ENCODE measurements at regions of chr1 and their contacts with region 1.

Region 1: GRCh38 chr1:19651141-19651737 is 7.1 kb downstream of the NBL1 start:
- DNase-seq: peak; percentile 62
- H3K4me3 ChIP-seq: no peak overlapping the region
- H3K27ac ChIP-seq: no peak overlapping the region
- H3K4me1 ChIP-seq: peaks cover 8% of the 10 kb centered on the region
- H3K27me3 ChIP-seq: no peaks in the 10 kb centered on the region
- CTCF ChIP-seq: peak; percentile 74

Region 2: GRCh38 chr1:18902523-18903290 is 748.5 kb before region 1 on chr1 and contains the start of gene ALDH4A1:
- CTCF ChIA-PET with region 1: no interaction called
- POLR2A ChIA-PET with region 1: no interaction called
- intact Hi-C with region 1: loop called (anchors 10 kb)
- DNase-seq: peak; percentile 99
- H3K4me3 ChIP-seq: peak within 1 kb of the TSS; percentile 89
- H3K27ac ChIP-seq: peak within 1 kb of the TSS; percentile 95
- H3K4me1 ChIP-seq: peaks cover 26% of the 10 kb centered on the region
- H3K27me3 ChIP-seq: no peaks in the 10 kb centered on the region
- CTCF ChIP-seq: no peak
- total RNA-seq, gene ALDH4A1: 18.4 and 23.1 TPM in 2 replicates

Region 3: GRCh38 chr1:19199969-19200604 is 451.2 kb before region 1 on chr1:
- CTCF ChIA-PET with region 1: interaction called, 3 read pairs
- POLR2A ChIA-PET with region 1: no interaction called
- intact Hi-C with region 1: loop called (anchors 5 kb)
- DNase-seq: no peak
- H3K4me3 ChIP-seq: no peak overlapping the region
- H3K27ac ChIP-seq: no peak overlapping the region
- H3K4me1 ChIP-seq: peaks cover 8% of the 10 kb centered on the region
- H3K27me3 ChIP-seq: no peaks in the 10 kb centered on the region
- CTCF ChIP-seq: no peak

Region 4: GRCh38 chr1:19251305-19252196 is 399.7 kb before region 1 on chr1 and contains the starts of genes EMC1 and MRTO4:
- CTCF ChIA-PET with region 1: interaction called, 3 read pairs
- POLR2A ChIA-PET with region 1: no interaction called
- intact Hi-C with region 1: loop called (anchors 2 kb)
- DNase-seq: peak; percentile 94
- H3K4me3 ChIP-seq: peak within 1 kb of the TSS; percentile 84
- H3K27ac ChIP-seq: peak within 1 kb of the TSS; percentile 99
- H3K4me1 ChIP-seq: peaks cover 25% of the 10 kb centered on the region
- H3K27me3 ChIP-seq: no peaks in the 10 kb centered on the region
- CTCF ChIP-seq: no peak
- total RNA-seq, gene EMC1: 75.9 and 84.3 TPM in 2 replicates
- total RNA-seq, gene MRTO4: 125 and 145 TPM in 2 replicates

Region 5: GRCh38 chr1:19305880-19306279 is 345.4 kb before region 1 on chr1:
- CTCF ChIA-PET with region 1: no interaction called
- POLR2A ChIA-PET with region 1: no interaction called
- intact Hi-C with region 1: no loop called
- DNase-seq: no peak
- H3K4me3 ChIP-seq: no peak overlapping the region
- H3K27ac ChIP-seq: no peak overlapping the region
- H3K4me1 ChIP-seq: peaks cover 5% of the 10 kb centered on the region
- H3K27me3 ChIP-seq: no peaks in the 10 kb centered on the region
- CTCF ChIP-seq: no peak

Region 6: DNA sequence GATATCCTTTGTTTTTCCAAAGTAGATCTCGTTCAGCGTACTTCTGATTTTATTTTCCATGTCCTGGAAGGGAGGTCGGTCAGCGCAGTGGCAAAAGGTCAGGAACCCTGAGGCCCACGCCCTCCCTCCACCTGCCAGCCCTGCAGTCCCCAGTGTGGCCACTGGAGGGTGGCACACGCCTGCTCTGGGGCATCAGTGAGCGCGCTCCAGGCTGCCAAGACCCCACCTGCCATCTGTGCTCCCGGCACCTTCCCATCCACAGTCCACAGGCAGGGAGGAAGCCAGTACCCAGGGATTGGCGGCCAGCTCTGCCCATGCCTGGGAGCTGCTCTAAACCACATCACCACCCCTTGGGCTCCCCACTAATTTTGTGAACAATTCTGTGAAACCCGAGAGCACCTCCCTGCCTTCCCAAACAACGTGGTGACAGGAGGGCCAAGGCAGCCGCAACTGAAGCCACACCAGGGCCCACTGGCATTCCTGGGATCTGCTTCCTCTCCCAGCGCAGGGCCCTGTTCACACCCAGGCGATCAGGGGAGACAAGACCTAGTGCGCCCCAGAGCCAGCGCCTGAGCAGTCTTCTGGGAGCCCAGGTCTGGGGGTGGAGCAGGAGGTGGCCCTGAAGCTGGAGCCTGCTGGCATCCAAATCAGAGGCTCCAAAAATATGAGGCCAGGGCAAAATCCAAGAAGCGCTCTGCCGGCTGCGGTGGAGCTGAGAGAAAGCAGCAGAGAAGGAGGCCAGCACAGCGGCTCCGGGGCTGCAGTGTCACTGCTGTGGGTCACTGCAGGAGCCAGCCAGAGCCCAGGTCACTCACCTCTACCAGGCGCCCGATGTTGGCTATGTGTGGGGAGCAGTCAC is 306.6 kb before region 1 on chr1:
- CTCF ChIA-PET with region 1: interaction called, 3 read pairs
- POLR2A ChIA-PET with region 1: no interaction called
- intact Hi-C with region 1: loop called (anchors 1 kb)
- DNase-seq: peak; percentile 45
- H3K4me3 ChIP-seq: no peak overlapping the region
- H3K27ac ChIP-seq: no peak overlapping the region
- H3K4me1 ChIP-seq: no peaks in the 10 kb centered on the region
- H3K27me3 ChIP-seq: no peaks in the 10 kb centered on the region
- CTCF ChIP-seq: peak; percentile 78

Region 7: DNA sequence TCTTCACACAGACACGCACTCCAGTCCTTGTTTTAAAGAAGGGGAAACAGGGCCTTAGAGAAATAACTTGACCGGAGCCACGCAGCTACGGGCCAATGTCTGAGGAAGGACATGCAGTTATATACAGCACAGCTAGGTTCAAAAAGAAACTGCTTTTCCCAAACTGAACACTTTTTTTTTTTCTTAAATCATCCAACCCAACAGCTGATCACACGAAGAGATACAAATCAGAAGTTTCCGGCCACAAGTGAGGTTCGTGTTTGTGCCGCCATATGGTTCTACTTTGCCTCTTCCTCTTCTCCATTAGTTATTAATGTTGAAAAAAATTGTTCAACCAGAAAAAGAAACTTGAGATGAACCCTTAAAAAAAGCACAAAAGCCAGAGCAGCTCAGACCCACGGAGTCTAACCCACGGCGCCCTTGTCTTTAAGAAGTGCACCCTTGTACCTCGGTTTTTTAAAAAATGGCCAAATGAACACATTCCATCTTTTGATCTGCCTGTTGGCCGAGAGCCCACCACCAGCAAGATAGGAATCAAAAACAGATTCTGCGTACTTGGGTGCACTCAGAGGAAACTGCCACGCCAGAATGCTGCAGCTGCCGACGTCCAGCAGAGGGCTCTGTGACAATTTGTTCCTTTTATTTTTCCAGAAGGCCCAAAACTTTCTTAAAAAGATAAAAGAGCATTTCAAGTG is 260.2 kb before region 1 on chr1:
- CTCF ChIA-PET with region 1: interaction called, 8 read pairs
- POLR2A ChIA-PET with region 1: no interaction called
- intact Hi-C with region 1: loop called (anchors 1 kb)
- DNase-seq: peak; percentile 81
- H3K4me3 ChIP-seq: peak overlapping the region; percentile 13
- H3K27ac ChIP-seq: peak overlapping the region; percentile 34
- H3K4me1 ChIP-seq: peaks cover 20% of the 10 kb centered on the region
- H3K27me3 ChIP-seq: no peaks in the 10 kb centered on the region
- CTCF ChIP-seq: peak; percentile 98

Region 8: GRCh38 chr1:19418503-19418971 is 232.7 kb before region 1 on chr1:
- CTCF ChIA-PET with region 1: interaction called, 3 read pairs
- POLR2A ChIA-PET with region 1: interaction called, 24 read pairs
- intact Hi-C with region 1: no loop called
- DNase-seq: no peak
- H3K4me3 ChIP-seq: no peak overlapping the region
- H3K27ac ChIP-seq: no peak overlapping the region
- H3K4me1 ChIP-seq: peaks cover 10% of the 10 kb centered on the region
- H3K27me3 ChIP-seq: no peaks in the 10 kb centered on the region
- CTCF ChIP-seq: no peak